ENCODE measurements at regions of chr6 and their contacts with region 1.

Region 1: DNA sequence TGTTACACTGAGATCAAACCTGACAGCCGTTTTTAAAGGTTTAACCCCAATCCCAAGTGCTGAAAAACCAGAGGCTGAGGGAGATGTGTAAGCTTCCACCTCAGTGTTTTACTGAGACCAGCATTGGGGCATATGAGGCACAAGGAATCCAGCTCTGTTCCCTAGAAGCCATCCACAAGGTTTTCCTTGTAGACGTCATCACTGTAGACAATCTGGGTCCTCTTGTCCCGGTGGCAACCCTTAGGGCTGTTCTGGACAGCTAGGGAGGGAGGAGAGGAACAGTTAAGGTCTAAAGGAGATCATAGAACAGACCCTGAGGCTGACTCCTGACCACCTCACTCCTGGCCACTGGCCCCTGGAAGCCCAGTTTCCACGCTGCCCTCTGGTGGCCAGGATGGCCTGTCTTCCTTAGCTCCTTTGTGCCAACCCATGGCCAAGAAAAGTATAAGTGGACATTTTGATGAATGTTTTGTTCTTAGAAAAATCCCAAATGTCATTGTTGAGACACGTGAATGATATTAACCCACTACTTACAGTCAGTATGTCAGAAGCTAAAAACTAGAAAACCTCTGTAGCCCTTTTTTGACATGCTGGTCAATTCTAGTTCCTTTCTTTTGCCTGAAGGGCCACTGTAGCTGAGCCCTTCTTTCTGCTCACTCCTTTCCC is 6.4 kb downstream of the CFB start:
- DNase-seq: no peak
- H3K4me3 ChIP-seq: no peak overlapping the region
- H3K27ac ChIP-seq: peak overlapping the region; percentile 18 to 60 (median 36)
- H3K4me1 ChIP-seq: peaks cover 0 to 14% (median 11%) of the 10 kb centered on the region in 4 donors
- H3K27me3 ChIP-seq: no peaks in the 10 kb centered on the region
- CTCF ChIP-seq: peak; percentile 66 to 77 (median 71)
- EP300 ChIP-seq: no peak
- POLR2A ChIP-seq: no peak

Region 2: DNA sequence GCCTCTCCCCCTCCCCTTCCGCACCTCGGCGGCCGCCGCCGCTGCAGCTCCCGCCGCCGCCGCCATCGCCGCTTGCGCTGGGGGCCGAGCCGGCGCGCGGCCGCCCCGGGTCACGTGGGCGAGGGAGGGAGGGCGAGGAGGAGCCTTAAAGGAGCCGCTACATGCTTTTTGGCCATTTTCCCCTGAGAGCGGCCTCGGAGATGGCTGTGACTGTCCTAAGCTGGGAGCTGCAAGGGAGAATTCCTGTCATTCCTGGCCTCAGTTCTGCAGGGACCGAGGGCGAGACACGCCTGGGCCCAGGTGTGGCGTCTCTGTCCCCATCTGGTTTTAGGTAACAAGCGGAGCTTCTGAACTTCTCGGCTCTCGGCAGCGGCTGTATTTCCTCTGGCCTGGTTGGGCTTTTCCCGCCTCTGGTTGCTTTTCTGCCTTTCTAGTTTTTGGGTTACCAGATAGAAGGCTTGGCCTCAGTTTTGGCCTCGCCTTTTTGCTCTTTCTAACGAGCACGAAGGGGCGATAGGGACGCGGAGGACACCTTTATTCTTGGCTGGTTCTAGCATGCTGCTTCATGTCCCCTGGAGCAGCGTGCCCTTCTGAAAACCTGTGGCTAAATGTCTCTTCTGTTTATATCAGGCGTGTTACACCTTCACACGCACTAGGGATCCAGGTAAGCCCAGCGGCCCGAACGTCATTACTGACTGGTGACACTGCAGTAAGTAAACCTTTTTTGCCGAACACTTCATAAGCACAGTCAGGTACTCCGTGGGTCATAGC is 54.5 kb before region 1 on chr6 and contains the start of gene EHMT2:
- intact Hi-C with region 1: loop called (anchors 5 kb)
- DNase-seq: peak; percentile 96
- H3K4me3 ChIP-seq: peak within 1 kb of the TSS; percentile 80 to 94 (median 88)
- H3K27ac ChIP-seq: peak within 1 kb of the TSS; percentile 86 to 92 (median 88)
- H3K4me1 ChIP-seq: peaks cover 29 to 52% (median 45%) of the 10 kb centered on the region in 4 donors
- H3K27me3 ChIP-seq: no peaks in the 10 kb centered on the region
- CTCF ChIP-seq: peak in 2 of 3 experiments; percentile 26 to 56
- EP300 ChIP-seq: no peak
- POLR2A ChIP-seq: peak; percentile 25
- total RNA-seq, gene EHMT2: 25.7 to 48.4 (median 38.1) TPM